ENCODE measurements at regions of chr6 and their contacts with region 1.

Region 1: GRCh38 chr6:88472851-88473525 is 306.8 kb upstream of the CNR1 start:
- DNase-seq: no peak
- H3K27ac ChIP-seq: no peak overlapping the region
- CTCF ChIP-seq: no peak

Region 2: DNA sequence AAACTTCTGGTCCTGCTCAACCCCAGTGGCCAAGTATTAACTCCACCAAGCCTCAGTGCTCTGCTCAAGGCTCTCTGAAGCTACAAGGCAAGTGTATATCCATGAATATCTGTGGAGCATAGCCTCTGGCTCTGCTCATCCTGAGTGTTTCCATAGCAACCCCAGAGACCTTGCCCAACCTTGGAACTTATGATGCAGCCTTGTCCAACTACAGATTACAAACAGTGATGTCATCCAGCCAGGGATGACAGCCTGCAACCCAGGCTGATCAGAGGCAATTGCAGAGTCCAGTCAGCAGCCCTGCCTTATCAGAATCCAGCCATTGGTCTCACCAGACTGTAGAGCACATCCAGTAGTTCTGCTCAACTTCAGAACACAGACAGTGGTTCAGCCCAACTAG is 490.9 kb before region 1 on chr6:
- CTCF ChIA-PET with region 1: interaction called, 12 read pairs
- POLR2A ChIA-PET with region 1: no interaction called
- DNase-seq: no peak
- H3K27ac ChIP-seq: no peak overlapping the region
- CTCF ChIP-seq: no peak

Region 3: DNA sequence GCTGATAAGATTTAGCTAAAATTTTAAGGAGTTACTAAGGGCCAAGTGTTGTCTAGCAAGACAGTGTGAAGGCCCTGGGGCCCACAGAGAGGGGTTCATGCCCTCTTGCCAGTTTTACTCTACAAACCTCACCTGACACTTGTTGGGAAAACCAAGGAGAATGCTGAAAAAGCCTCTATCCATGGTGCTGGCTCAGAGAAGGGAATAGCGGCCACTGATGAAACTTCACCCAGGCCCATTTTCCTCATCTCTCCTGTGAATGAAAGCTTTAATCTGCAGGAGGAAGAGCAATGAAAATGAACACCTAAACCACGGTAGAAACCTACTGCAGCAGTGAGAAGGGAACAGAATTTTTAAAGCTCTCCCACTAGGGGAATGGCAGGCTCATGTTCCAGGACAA is 10.4 kb after region 1 on chr6:
- CTCF ChIA-PET with region 1: no interaction called
- POLR2A ChIA-PET with region 1: no interaction called
- DNase-seq: no peak
- H3K27ac ChIP-seq: no peak overlapping the region
- CTCF ChIP-seq: no peak

Measured in RWPE1 (cell line).